ENCODE measurements at regions of chr11 and their contacts with region 1.

Region 1: GRCh38 chr11:63838678-63839507 is at the start of gene MARK2:
- DNase-seq: peak; percentile 99 to 100 (median 100)
- H3K4me3 ChIP-seq: peak within 1 kb of the TSS; percentile 80
- H3K27ac ChIP-seq: peak within 1 kb of the TSS; percentile 84 to 93
- H3K4me1 ChIP-seq: peaks cover 11% of the 10 kb centered on the region
- H3K27me3 ChIP-seq: no peaks in the 10 kb centered on the region
- CTCF ChIP-seq: peak in 1 of 3 donors; percentile 17
- EP300 ChIP-seq: no peak
- POLR2A ChIP-seq: peak; percentile 73
- total RNA-seq, gene MARK2: 13.5 to 27.8 (median 25.8) TPM

Region 2: GRCh38 chr11:64094463-64095260 is 255.8 kb after region 1 on chr11:
- intact Hi-C with region 1: no loop called
- DNase-seq: no peak
- H3K4me3 ChIP-seq: no peak overlapping the region
- H3K27ac ChIP-seq: no peak overlapping the region
- H3K4me1 ChIP-seq: peaks cover 8% of the 10 kb centered on the region
- H3K27me3 ChIP-seq: no peaks in the 10 kb centered on the region
- CTCF ChIP-seq: no peak
- EP300 ChIP-seq: no peak
- POLR2A ChIP-seq: no peak

Region 3: GRCh38 chr11:64152841-64153691 is 314.2 kb after region 1 on chr11:
- intact Hi-C with region 1: loop called (anchors 5 to 10 kb)
- DNase-seq: peak; percentile 57 to 84 (median 74)
- H3K4me3 ChIP-seq: no peak overlapping the region
- H3K27ac ChIP-seq: peak overlapping the region in 1 of 2 donors; percentile 11
- H3K4me1 ChIP-seq: peaks cover 15% of the 10 kb centered on the region
- H3K27me3 ChIP-seq: no peaks in the 10 kb centered on the region
- CTCF ChIP-seq: peak; percentile 93 to 98 (median 94)
- EP300 ChIP-seq: no peak
- POLR2A ChIP-seq: no peak